Activated naive CD4-positive, alpha-beta T cell treated with anti-CD3 and anti-CD28 coated beads for 36 hours (primary cell): ENCODE measurements at regions of chr1 and their contacts with region 1.

Region 1: DNA sequence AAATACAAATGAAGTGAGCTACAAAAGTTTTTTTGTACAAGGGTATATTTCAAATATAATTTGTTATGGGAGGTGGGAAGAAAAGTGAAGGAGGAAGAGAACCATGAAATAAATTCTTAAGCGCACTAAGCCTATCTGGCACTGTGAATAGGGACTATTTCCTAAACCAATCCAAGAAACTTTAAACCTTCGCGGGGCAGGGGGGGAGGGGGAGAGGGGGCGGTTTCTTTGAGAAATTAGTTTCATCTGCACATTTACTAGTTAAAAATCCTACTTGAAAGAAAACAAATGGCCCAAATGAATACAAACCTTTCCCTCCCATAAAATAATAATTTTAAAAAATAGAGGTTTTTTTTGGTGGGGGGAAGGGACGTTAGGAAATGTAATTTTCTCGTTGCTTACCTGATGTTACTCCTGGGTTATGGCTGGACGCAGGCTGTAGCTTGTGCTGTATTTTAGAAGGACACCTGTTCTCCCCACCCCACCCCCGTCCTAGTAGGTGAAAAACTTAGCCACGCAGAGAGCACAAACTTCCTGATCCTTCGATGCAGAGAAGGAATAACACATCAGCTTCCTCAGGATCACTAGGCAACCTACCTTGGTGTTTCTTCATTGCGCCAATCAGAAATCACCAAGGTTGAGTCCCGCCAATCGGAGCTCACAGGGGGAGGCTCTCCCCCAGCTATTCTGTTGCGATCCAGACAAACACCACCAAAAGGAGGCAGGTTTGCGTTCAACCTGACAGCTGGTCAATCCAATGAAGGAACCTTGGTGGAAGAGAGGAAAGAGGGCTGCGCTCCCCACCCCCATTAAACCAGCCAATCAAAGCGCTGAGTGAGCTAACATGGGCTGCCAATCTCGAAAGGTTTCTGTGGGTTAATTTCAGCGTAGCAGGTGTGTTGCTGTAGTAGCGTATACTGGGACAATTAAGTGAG is at the start of gene GOLPH3L:
- DNase-seq: peak; percentile 97
- H3K4me3 Mint-ChIP-seq: peak within 1 kb of the TSS; percentile 92
- H3K27ac Mint-ChIP-seq: peak within 1 kb of the TSS; percentile 82
- H3K4me1 Mint-ChIP-seq: peaks cover 23% of the 10 kb centered on the region
- H3K27me3 Mint-ChIP-seq: peaks cover 2% of the 10 kb centered on the region
- total RNA-seq, gene GOLPH3L: 17.1 to 18.2 TPM

Region 2: DNA sequence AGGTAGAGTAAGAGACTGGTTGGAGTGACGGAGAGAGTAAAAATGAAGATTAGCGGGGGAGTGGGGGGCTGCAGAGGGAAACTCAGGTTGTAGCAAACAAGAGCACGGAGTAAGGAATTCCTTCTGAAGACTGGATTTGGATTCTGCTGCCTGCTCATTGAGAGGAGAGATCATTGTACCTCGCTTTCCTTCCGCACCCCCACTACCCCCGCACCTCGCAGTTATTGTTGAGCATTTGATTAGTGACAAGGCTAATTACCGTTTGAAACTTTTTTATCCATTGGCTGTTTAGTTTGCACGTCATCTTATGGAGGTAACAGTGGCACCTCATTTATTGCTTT is 375.1 kb before region 1 on chr1:
- CTCF ChIA-PET with region 1: no interaction called
- intact Hi-C with region 1: loop called (anchors 1 kb)
- DNase-seq: no peak
- H3K4me3 Mint-ChIP-seq: peak overlapping the region; percentile 99
- H3K27ac Mint-ChIP-seq: peak overlapping the region; percentile 99
- H3K4me1 Mint-ChIP-seq: peaks cover 36% of the 10 kb centered on the region
- H3K27me3 Mint-ChIP-seq: no peaks in the 10 kb centered on the region

Region 3: GRCh38 chr1:150486964-150487762 is 209.7 kb before region 1 on chr1 and contains the start of gene TARS2:
- CTCF ChIA-PET with region 1: no interaction called
- intact Hi-C with region 1: loop called (anchors 2 kb)
- DNase-seq: peak; percentile 99
- H3K4me3 Mint-ChIP-seq: peak within 1 kb of the TSS; percentile 98
- H3K27ac Mint-ChIP-seq: peak within 1 kb of the TSS; percentile 96
- H3K4me1 Mint-ChIP-seq: peaks cover 10% of the 10 kb centered on the region
- H3K27me3 Mint-ChIP-seq: no peaks in the 10 kb centered on the region
- total RNA-seq, gene TARS2: 43.7 to 46.0 TPM

Region 4: GRCh38 chr1:150567717-150568593 is 128.9 kb before region 1 on chr1:
- CTCF ChIA-PET with region 1: no interaction called
- intact Hi-C with region 1: loop called (anchors 1 kb)
- DNase-seq: peak; percentile 67
- H3K4me3 Mint-ChIP-seq: peak overlapping the region; percentile 71
- H3K27ac Mint-ChIP-seq: peak overlapping the region; percentile 99
- H3K4me1 Mint-ChIP-seq: peaks cover 94% of the 10 kb centered on the region
- H3K27me3 Mint-ChIP-seq: no peaks in the 10 kb centered on the region

Region 5: DNA sequence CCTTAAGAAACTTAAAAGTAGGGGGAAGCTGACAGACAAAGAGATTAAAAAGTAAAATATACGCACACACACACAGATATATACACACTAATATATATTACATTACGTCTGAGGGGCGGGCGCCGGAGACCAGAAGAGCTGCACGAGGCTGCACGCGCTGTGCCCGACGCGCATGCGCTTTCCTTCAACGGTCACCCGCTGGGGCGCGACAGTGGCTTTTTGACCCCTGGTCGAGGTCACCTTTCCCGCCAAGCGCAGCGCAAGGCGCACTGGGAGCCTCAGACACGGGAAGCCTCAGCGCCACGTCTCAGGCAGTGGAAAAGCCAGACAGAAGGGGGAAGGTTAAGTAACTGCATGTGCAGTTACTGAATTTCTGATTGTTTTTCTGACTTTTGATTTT is 23.8 kb after region 1 on chr1 and contains the start of gene HORMAD1:
- CTCF ChIA-PET with region 1: no interaction called
- intact Hi-C with region 1: no loop called
- DNase-seq: no peak
- H3K4me3 Mint-ChIP-seq: no peak within 1 kb of the TSS
- H3K27ac Mint-ChIP-seq: no peak within 1 kb of the TSS
- H3K4me1 Mint-ChIP-seq: no peaks in the 10 kb centered on the region
- H3K27me3 Mint-ChIP-seq: no peaks in the 10 kb centered on the region
- total RNA-seq, gene HORMAD1: not detected

Region 6: GRCh38 chr1:150765296-150765976 is 68.6 kb after region 1 on chr1 and contains the start of gene CTSS:
- CTCF ChIA-PET with region 1: no interaction called
- intact Hi-C with region 1: loop called (anchors 5 kb)
- DNase-seq: no peak
- H3K4me3 Mint-ChIP-seq: peak within 1 kb of the TSS; percentile 90
- H3K27ac Mint-ChIP-seq: peak within 1 kb of the TSS; percentile 94
- H3K4me1 Mint-ChIP-seq: peaks cover 48% of the 10 kb centered on the region
- H3K27me3 Mint-ChIP-seq: no peaks in the 10 kb centered on the region
- total RNA-seq, gene CTSS: 37.0 to 37.7 TPM